Activated CD4-positive, alpha-beta memory T cell treated with anti-CD3 and anti-CD28 coated beads for 36 hours (primary cell): ENCODE measurements at regions of chr12 and their contacts with region 1.

Region 1: GRCh38 chr12:89225808-89226411 is 126.4 kb downstream of the DUSP6 start:
- DNase-seq: peak; percentile 72
- H3K4me3 Mint-ChIP-seq: peak overlapping the region; percentile 34
- H3K27ac Mint-ChIP-seq: peak overlapping the region; percentile 99
- H3K4me1 Mint-ChIP-seq: peaks cover 65% of the 10 kb centered on the region
- H3K27me3 Mint-ChIP-seq: no peaks in the 10 kb centered on the region

Region 2: GRCh38 chr12:89092297-89092696 is 133.6 kb before region 1 on chr12:
- CTCF ChIA-PET with region 1: no interaction called
- POLR2A ChIA-PET with region 1: no interaction called
- intact Hi-C with region 1: loop called (anchors 1 kb)
- DNase-seq: peak; percentile 48
- H3K4me3 Mint-ChIP-seq: no peak overlapping the region
- H3K27ac Mint-ChIP-seq: peak overlapping the region; percentile 92
- H3K4me1 Mint-ChIP-seq: peaks cover 12% of the 10 kb centered on the region
- H3K27me3 Mint-ChIP-seq: peaks cover 3% of the 10 kb centered on the region

Region 3: DNA sequence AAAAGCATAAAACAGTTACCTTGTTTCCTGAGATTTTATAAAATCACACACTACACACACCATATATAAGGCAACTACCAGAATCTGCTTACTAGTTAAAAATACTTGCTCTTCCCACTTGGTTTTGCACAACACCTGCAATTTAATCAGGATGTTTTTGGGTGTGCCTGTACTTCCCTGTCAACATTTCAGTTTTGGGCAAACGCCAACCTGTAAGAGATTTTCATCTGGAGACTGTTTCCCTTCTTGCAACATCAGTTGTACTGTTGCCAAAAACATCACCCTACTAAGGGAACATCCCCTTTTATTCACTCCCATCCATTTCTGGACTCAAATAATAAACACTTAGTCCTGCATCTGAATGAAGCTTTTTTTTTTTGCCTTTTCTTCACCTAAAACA is 45.9 kb before region 1 on chr12:
- CTCF ChIA-PET with region 1: interaction called, 6 read pairs
- POLR2A ChIA-PET with region 1: interaction called, 16 read pairs
- intact Hi-C with region 1: loop called (anchors 1 kb)
- DNase-seq: no peak
- H3K4me3 Mint-ChIP-seq: no peak overlapping the region
- H3K27ac Mint-ChIP-seq: peak overlapping the region; percentile 74
- H3K4me1 Mint-ChIP-seq: peaks cover 35% of the 10 kb centered on the region
- H3K27me3 Mint-ChIP-seq: no peaks in the 10 kb centered on the region

Region 4: GRCh38 chr12:89345830-89346740 is 120.2 kb after region 1 on chr12:
- CTCF ChIA-PET with region 1: interaction called, 6 read pairs
- POLR2A ChIA-PET with region 1: interaction called, 38 read pairs
- intact Hi-C with region 1: loop called (anchors 1 kb)
- DNase-seq: peak; percentile 65
- H3K4me3 Mint-ChIP-seq: peak overlapping the region; percentile 57
- H3K27ac Mint-ChIP-seq: peak overlapping the region; percentile 76
- H3K4me1 Mint-ChIP-seq: peaks cover 56% of the 10 kb centered on the region
- H3K27me3 Mint-ChIP-seq: peaks cover 2% of the 10 kb centered on the region

Region 5: GRCh38 chr12:89524541-89525285 is 298.8 kb after region 1 on chr12 and contains the start of gene GALNT4:
- CTCF ChIA-PET with region 1: no interaction called
- POLR2A ChIA-PET with region 1: interaction called, 3 read pairs
- intact Hi-C with region 1: loop called (anchors 1 kb)
- DNase-seq: peak; percentile 86
- H3K4me3 Mint-ChIP-seq: peak within 1 kb of the TSS; percentile 99
- H3K27ac Mint-ChIP-seq: peak within 1 kb of the TSS; percentile 98
- H3K4me1 Mint-ChIP-seq: peaks cover 45% of the 10 kb centered on the region
- H3K27me3 Mint-ChIP-seq: no peaks in the 10 kb centered on the region
- total RNA-seq, gene GALNT4: 5.8 to 6.0 TPM